B cell (primary cell): ENCODE measurements at regions of chr2 and their contacts with region 1.

Region 1: GRCh38 chr2:36951574-36951973 is 14.8 kb downstream of the STRN start:
- DNase-seq: no peak
- ATAC-seq: no peak
- H3K4me3 ChIP-seq: no peak overlapping the region
- H3K4me3 Mint-ChIP-seq: no peak overlapping the region
- H3K27ac ChIP-seq: no peak overlapping the region
- H3K27ac Mint-ChIP-seq: no peak overlapping the region
- H3K4me1 ChIP-seq: no peaks in the 10 kb centered on the region
- H3K4me1 Mint-ChIP-seq: peaks cover 21% of the 10 kb centered on the region
- H3K27me3 ChIP-seq: no peaks in the 10 kb centered on the region
- H3K27me3 Mint-ChIP-seq: no peaks in the 10 kb centered on the region
- CTCF ChIP-seq: no peak

Region 2: DNA sequence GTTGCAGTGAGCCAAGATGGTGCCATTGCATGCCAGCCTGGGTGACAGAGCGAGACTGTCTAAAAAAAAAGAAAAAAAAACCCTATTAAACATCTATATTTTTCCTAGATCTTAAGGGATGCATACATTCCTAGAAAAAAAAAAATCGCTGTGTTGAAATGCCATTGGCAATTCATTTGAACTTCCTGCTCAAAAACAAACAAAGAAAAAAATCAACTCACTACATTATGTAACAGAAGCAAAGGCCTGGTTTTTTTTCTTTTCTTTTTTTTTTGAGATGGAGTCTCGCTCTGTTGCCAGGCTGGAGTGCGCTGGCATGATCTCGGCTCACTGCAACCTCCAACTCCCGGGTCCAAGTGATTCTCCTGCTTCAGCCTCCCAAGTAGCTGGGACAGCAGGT is 36.4 kb after region 1 on chr2:
- CTCF ChIA-PET with region 1: no interaction called
- POLR2A ChIA-PET with region 1: interaction called, 12 read pairs
- intact Hi-C with region 1: no loop called
- DNase-seq: no peak
- ATAC-seq: no peak
- H3K4me3 ChIP-seq: no peak overlapping the region
- H3K4me3 Mint-ChIP-seq: no peak overlapping the region
- H3K27ac ChIP-seq: no peak overlapping the region
- H3K27ac Mint-ChIP-seq: no peak overlapping the region
- H3K4me1 ChIP-seq: no peaks in the 10 kb centered on the region
- H3K4me1 Mint-ChIP-seq: no peaks in the 10 kb centered on the region
- H3K27me3 ChIP-seq: no peaks in the 10 kb centered on the region
- H3K27me3 Mint-ChIP-seq: no peaks in the 10 kb centered on the region
- CTCF ChIP-seq: no peak